Upper lobe of right lung (tissue), 1 donor: ENCODE measurements at regions of chr1 and their contacts with region 1.

Region 1: DNA sequence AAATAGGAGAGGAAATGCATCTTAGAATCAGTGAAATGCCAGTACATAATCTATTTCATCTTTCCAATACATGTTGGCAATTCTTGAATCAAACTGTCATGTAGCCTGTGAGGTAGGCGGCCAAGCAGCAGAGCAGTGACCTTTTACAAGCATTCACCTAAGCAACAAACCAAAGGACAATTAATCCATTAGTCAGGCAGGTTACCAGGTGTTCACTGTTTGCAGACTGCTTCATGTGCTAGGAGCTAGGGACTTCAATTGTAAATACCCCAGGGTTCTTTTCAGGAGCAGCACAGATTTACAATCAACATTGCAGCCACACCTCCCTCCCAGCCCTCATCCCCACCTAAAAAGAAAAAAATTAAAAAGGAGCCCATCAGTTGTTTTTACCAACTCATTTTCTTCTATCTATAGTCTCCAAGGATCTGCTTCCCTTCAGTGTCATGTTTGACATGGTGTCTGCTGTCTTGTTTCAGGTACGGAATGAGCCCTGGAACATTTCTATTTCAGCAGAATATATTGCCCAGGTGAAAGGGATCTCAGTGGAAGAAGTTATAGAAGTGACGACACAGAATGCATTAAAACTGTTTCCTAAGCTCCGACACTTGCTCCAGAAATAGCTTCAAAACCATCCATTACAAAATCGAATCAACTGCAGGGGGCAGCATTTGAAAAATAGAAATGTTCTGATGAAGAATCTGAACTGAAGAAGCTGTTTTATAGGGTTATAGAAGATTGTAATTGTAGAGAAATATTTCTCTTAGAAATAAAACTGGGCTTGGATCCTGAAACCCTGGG is 23.0 kb downstream of the TATDN3 start:
- DNase-seq: no peak
- ATAC-seq: no peak
- H3K4me3 ChIP-seq: no peak overlapping the region
- H3K27ac ChIP-seq: no peak overlapping the region
- H3K4me1 ChIP-seq: peaks cover under 1% of the 10 kb centered on the region
- H3K27me3 ChIP-seq: no peaks in the 10 kb centered on the region
- CTCF ChIP-seq: peak; percentile 35

Region 2: GRCh38 chr1:212990276-212990675 is 175.5 kb after region 1 on chr1:
- intact Hi-C with region 1: loop called (anchors 10 kb)
- DNase-seq: no peak
- ATAC-seq: no peak
- H3K4me3 ChIP-seq: no peak overlapping the region
- H3K27ac ChIP-seq: no peak overlapping the region
- H3K4me1 ChIP-seq: no peaks in the 10 kb centered on the region
- H3K27me3 ChIP-seq: no peaks in the 10 kb centered on the region
- CTCF ChIP-seq: no peak